BJ (cell line): ENCODE measurements at regions of chr15 and their contacts with region 1.

Region 1: GRCh38 chr15:88624156-88624970 is 3.2 kb downstream of the AEN start:
- DNase-seq: no peak
- H3K4me3 ChIP-seq: no peak overlapping the region
- H3K27me3 ChIP-seq: no peaks in the 10 kb centered on the region
- CTCF ChIP-seq: peak; percentile 51

Region 2: GRCh38 chr15:88331280-88331679 is 293.1 kb before region 1 on chr15:
- CTCF ChIA-PET with region 1: no interaction called
- POLR2A ChIA-PET with region 1: no interaction called
- DNase-seq: no peak
- H3K4me3 ChIP-seq: no peak overlapping the region
- H3K27me3 ChIP-seq: no peaks in the 10 kb centered on the region
- CTCF ChIP-seq: peak; percentile 46

Region 3: DNA sequence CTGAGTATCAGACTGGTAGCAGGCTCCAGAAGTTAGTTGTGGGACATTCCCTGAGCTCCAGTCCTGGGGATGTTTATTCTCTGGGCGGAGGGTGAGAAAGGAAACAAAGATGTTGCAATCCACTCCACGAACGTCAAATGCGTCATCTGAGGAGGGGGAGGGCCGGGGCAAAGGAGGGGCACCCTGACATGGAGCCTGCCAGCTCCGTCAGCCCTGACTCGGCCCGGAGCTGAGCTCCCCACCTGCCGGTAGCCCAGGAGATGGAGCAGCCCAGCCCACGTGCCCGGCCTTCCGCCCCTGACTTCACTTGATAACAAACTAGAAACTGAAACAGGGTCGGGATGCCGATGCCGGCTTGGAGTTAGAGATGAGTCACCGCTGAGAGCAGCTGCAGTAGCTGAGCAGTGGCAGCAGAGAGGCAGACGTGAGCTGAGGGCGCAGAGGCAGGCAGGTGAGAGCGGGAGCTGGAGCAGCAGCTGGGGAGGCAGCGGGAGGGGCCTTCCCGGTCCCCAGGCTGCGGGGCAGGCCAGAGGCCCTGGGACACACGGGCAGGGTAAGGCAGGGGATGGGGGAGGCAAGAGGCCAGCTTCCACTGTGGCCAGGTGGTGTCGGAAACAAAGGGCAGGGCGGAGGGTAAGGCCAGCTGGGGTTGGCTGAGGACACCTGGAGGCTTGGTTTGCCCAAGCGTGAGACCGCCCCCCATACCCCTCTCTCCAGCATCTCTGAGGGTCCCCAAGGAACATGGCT is 14.4 kb after region 1 on chr15 and contains the start of gene ISG20:
- CTCF ChIA-PET with region 1: interaction called, 24 read pairs
- POLR2A ChIA-PET with region 1: no interaction called
- DNase-seq: peak; percentile 80
- H3K4me3 ChIP-seq: peak within 1 kb of the TSS; percentile 46
- H3K27me3 ChIP-seq: no peaks in the 10 kb centered on the region
- CTCF ChIP-seq: peak; percentile 61
- polyA plus RNA-seq, gene ISG20: 1.8 and 4.2 TPM in 2 replicates

Region 4: DNA sequence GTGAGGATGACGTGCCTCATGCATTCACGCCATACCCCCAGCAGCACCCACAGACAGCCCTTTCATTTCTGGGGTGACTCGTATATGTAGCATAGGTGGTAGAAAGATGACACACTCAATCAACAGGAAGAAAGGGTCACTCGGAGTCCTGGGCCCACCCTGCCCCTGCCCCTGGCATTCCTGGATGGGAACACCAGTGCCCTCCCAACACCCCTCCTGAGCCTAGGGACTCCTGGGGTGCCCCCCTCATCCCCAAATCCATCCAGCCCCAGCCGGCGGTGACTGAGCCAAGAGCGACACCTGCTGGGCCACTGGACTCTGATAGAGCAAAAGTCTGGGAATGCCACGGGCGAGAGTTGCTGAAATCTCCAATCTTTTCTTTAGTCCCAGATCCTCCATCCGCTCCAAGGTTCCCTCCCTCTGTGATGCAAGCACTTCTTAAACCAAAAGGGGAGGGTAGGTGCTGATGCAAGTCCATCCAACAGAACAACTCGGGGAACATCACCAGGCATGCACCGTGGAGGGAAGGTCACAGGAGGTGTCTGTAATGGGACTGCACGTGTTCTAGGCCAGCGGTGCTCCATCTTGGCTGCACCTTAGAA is 209.9 kb after region 1 on chr15:
- CTCF ChIA-PET with region 1: interaction called, 21 read pairs
- POLR2A ChIA-PET with region 1: no interaction called
- DNase-seq: no peak
- H3K4me3 ChIP-seq: no peak overlapping the region
- H3K27me3 ChIP-seq: no peaks in the 10 kb centered on the region
- CTCF ChIP-seq: peak; percentile 68

Region 5: DNA sequence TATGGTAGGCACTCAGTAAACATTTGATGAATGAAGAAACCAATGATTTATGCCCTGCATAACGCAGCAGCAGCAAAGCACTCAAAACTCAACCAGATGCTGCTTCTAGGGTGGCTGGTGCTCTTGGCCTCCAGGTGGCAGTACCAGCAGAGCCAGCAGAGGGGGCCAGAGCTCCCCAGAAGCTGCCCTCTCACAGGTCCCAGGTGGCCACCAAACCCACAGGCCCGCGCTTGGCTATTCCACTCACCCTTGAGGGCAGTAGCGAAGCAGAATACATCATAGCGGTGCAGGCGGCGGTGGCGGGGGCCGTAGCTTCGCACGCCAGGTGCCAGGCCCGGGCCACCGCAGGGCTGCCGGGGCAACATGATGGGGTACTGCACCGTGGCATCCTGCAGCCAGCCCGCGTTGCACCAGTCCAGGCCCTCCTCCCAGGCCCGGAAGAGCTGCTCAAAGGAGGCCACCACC is 254.4 kb after region 1 on chr15:
- CTCF ChIA-PET with region 1: interaction called, 5 read pairs
- POLR2A ChIA-PET with region 1: interaction called, 20 read pairs
- DNase-seq: no peak
- H3K4me3 ChIP-seq: no peak overlapping the region
- H3K27me3 ChIP-seq: no peaks in the 10 kb centered on the region
- CTCF ChIP-seq: peak; percentile 91